Astrocyte of the cerebellum (primary cell): ENCODE measurements at regions of chr10 and their contacts with region 1.

Region 1: DNA sequence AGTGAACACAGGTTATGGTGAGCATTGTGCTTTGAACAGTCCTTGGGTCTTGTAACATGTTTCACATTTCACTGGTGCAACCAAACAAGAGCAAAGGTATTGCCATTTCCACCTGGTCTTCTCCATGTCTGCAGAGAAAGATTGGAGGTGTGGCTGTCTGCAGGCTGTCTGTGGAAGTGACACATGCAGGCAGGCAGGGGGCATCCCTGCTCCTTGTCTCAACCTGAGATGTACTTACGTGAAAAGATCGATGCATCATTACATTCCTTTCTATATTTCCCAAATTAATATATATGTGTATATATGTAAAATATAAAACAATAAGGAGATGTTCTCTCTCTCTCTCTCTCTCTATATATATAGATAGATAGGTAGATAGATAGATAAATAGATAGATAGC is 54.3 kb downstream of the LRRC18 start:
- DNase-seq: peak; percentile 1
- H3K4me3 ChIP-seq: no peak overlapping the region
- CTCF ChIP-seq: peak; percentile 43

Region 2: DNA sequence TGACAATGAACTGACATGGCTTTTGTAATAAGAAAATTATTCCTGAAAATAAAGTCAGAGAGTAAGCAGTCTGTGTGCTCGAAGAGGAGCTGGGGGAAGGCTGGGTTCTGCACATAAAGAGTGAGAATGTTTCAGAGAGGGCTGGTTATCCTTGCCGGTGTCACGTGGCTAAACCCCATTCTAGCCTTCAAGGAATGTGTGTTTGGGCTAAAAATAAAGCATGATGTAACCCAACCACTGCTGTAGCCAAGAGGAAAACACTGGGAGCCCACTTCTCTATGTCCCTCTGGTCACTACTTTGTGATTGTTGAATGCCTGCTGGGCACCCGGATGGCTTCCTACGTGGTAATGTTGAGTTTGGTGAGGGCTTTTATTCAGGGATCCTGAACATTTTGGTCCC is 177.2 kb before region 1 on chr10:
- in situ Hi-C with region 1: loop called (anchors 25 kb)
- DNase-seq: no peak
- H3K4me3 ChIP-seq: no peak overlapping the region
- CTCF ChIP-seq: no peak